CD4-positive, alpha-beta T cell (primary cell): ENCODE measurements at regions of chr10 and their contacts with region 1.

Region 1: DNA sequence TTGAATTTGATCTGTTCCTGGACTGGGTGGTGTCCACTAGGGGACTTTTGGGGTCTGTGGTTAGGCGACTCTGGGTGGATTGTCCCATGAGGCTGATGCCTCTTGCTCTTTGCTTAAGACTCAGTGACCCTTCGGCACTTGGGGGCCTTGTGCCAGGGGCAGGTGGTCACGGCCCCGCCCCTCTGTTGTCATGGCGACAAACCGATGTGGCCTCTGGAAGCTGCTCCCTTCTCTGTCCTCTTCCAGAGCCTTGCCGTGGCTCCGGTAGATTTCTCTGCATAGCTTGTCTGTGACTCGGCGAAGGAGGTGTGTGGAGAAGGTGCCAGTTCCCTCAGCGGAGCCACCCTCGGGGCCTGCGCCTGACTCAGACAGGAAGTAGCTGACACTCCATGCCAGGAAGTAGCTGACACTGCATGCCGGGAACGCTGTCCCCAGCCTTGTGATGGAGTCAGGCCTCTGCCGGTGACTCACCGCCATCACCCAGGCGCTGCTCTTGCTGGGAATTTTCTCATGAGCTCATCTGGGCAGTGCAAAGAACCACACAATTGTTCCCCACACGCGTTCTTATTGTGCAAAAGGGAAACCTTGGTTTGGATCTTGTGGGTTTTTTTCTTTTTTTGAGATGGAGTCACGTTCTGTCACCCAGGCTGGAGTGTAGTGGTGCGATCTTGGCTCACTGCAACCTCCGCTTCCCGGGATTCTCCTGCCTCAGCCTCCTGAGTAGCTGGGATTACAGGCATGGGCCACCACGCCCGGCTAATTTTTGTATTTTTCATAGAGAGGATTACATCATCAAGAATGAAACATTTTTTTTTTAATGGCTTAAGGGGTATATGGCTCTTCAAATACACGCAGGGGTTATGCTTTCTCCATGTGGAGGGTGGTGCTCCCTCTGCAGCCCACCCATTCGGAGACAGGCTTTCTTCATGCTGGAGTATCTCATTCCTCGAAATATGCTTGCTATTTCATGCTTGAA is 72.6 kb downstream of the PFKFB3 start:
- DNase-seq: peak; percentile 63 to 97 (median 85)
- ATAC-seq: peak; percentile 89
- H3K4me3 ChIP-seq: peak overlapping the region; percentile 34
- H3K4me3 Mint-ChIP-seq: peak overlapping the region; percentile 43
- H3K27ac ChIP-seq: peak overlapping the region; percentile 15 to 73
- H3K27ac Mint-ChIP-seq: peak overlapping the region; percentile 91
- H3K4me1 ChIP-seq: peaks cover 42% of the 10 kb centered on the region
- H3K4me1 Mint-ChIP-seq: peaks cover 35% of the 10 kb centered on the region
- H3K27me3 ChIP-seq: no peaks in the 10 kb centered on the region
- H3K27me3 Mint-ChIP-seq: no peaks in the 10 kb centered on the region
- CTCF ChIP-seq: no peak

Region 2: DNA sequence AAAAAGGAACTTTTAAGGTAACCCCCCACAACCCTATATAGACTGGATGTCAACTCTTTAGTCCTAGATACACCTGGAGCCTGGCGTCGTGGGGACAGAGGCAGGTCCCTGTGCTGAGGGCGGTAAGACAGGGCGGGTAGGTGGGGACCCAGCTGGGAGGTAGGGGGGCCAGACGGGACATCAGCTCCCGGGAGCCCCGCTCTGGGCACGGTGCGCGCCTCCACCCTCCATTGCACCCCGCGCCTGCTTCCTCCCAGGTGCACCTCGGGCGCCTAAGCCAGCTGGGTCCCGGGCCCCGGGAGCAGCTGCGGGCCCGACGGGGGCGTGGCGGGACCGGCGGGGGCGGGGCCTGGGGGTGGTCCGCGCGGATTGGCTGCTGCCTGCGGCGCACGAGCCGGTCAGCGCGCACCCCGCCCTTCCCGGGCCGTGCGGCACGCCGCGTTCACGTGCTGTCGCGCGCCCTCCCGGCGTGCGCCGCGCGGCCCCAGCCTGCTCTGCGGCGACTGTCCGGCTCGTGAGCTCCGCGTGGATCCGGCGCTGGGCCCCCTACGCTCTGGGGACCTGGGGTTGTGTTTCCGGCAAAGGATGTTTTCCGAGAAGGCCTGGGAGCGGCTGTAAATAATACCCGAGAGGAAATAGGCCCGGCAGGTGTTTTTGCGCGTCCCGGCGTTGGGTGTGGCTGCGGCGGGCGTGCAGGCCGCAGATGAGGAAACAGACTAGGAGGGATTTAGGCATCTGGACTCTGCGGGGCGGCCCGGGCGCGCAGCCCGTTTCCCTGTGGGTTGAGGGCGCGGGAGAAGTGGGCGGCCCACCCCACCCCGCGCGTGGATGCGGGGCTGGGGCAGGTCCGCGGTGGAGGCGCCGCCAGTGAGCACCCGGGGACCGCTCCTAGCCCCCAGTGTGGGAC is 111.7 kb before region 1 on chr10:
- CTCF ChIA-PET with region 1: no interaction called
- POLR2A ChIA-PET with region 1: no interaction called
- intact Hi-C with region 1: no loop called
- DNase-seq: peak; percentile 83 to 97 (median 92)
- ATAC-seq: peak; percentile 86
- H3K4me3 ChIP-seq: peak overlapping the region; percentile 71
- H3K4me3 Mint-ChIP-seq: peak overlapping the region; percentile 90
- H3K27ac ChIP-seq: peak overlapping the region; percentile 91 to 93
- H3K27ac Mint-ChIP-seq: peak overlapping the region; percentile 94
- H3K4me1 ChIP-seq: peaks cover 42% of the 10 kb centered on the region
- H3K4me1 Mint-ChIP-seq: peaks cover 47% of the 10 kb centered on the region
- H3K27me3 ChIP-seq: no peaks in the 10 kb centered on the region
- H3K27me3 Mint-ChIP-seq: no peaks in the 10 kb centered on the region
- CTCF ChIP-seq: no peak

Region 3: GRCh38 chr10:6382081-6382480 is 106.8 kb after region 1 on chr10:
- CTCF ChIA-PET with region 1: no interaction called
- POLR2A ChIA-PET with region 1: no interaction called
- intact Hi-C with region 1: loop called in 1 of 2 experiments (anchors 10 kb)
- DNase-seq: peak in 13 of 14 experiments; percentile 7 to 71 (median 52)
- ATAC-seq: peak; percentile 91
- H3K4me3 ChIP-seq: peak overlapping the region; percentile 12
- H3K4me3 Mint-ChIP-seq: peak overlapping the region; percentile 67
- H3K27ac ChIP-seq: no peak overlapping the region
- H3K27ac Mint-ChIP-seq: peak overlapping the region; percentile 55
- H3K4me1 ChIP-seq: peaks cover 13% of the 10 kb centered on the region
- H3K4me1 Mint-ChIP-seq: peaks cover 20% of the 10 kb centered on the region
- H3K27me3 ChIP-seq: no peaks in the 10 kb centered on the region
- H3K27me3 Mint-ChIP-seq: no peaks in the 10 kb centered on the region
- CTCF ChIP-seq: no peak